A673 (cell line): ENCODE measurements at regions of chr2 and their contacts with region 1.

Region 1: GRCh38 chr2:237291138-237291792 is 122.7 kb downstream of the COL6A3 start:
- DNase-seq: peak; percentile 98
- H3K4me3 ChIP-seq: peak overlapping the region; percentile 8
- H3K27ac ChIP-seq: peak overlapping the region; percentile 23
- H3K4me1 ChIP-seq: peaks cover 22% of the 10 kb centered on the region
- H3K27me3 ChIP-seq: peaks cover 12% of the 10 kb centered on the region
- CTCF ChIP-seq: no peak

Region 2: DNA sequence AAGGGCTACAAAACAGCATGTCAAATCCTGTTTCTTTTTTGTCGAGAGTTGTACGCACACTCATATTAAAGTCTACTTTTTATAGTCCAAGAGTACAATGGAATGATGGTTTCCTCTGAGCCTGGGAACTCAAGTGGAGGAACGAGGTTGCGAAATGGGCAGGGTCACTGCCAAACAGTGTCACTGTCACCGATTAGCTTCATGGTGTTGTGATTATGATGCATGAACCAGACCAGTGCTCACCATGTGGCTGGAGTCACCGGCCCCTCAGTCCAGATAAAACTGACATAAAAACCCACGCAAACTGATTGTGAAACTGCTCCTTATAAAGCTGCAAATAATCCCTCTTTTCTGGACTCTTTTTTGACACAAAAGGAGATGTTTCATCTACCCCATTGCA is 83.6 kb before region 1 on chr2:
- CTCF ChIA-PET with region 1: no interaction called
- POLR2A ChIA-PET with region 1: no interaction called
- intact Hi-C with region 1: loop called (anchors 5 kb)
- DNase-seq: peak; percentile 63
- H3K4me3 ChIP-seq: no peak overlapping the region
- H3K27ac ChIP-seq: peak overlapping the region; percentile 44
- H3K4me1 ChIP-seq: peaks cover 52% of the 10 kb centered on the region
- H3K27me3 ChIP-seq: no peaks in the 10 kb centered on the region
- CTCF ChIP-seq: no peak